Common myeloid progenitor, CD34-positive (primary cell): ENCODE measurements at regions of chr16 and their contacts with region 1.

Region 1: GRCh38 chr16:30692381-30693064 is 6.4 kb upstream of the SRCAP start:
- DNase-seq: peak in 2 of 3 donors; percentile 52 to 54
- H3K4me3 ChIP-seq: no peak overlapping the region
- H3K27ac ChIP-seq: no peak overlapping the region
- H3K4me1 ChIP-seq: peaks cover 4 to 32% (median 30%) of the 10 kb centered on the region in 4 experiments
- H3K27me3 ChIP-seq: no peaks in the 10 kb centered on the region

Region 2: GRCh38 chr16:30551781-30552180 is 140.7 kb before region 1 on chr16:
- CTCF ChIA-PET with region 1: no interaction called
- POLR2A ChIA-PET with region 1: no interaction called
- DNase-seq: no peak
- H3K4me3 ChIP-seq: no peak overlapping the region
- H3K27ac ChIP-seq: no peak overlapping the region
- H3K4me1 ChIP-seq: peaks cover 0 to 14% (median 11%) of the 10 kb centered on the region in 4 experiments
- H3K27me3 ChIP-seq: no peaks in the 10 kb centered on the region

Region 3: GRCh38 chr16:30650369-30651123 is 42.0 kb before region 1 on chr16 and contains the start of gene PRR14:
- CTCF ChIA-PET with region 1: interaction called, 19 read pairs
- POLR2A ChIA-PET with region 1: no interaction called
- DNase-seq: peak; percentile 100
- H3K4me3 ChIP-seq: peak within 1 kb of the TSS; percentile 60 to 98 (median 90)
- H3K27ac ChIP-seq: peak within 1 kb of the TSS; percentile 94 to 95
- H3K4me1 ChIP-seq: peaks cover 6 to 43% (median 32%) of the 10 kb centered on the region in 4 experiments
- H3K27me3 ChIP-seq: no peaks in the 10 kb centered on the region

Region 4: DNA sequence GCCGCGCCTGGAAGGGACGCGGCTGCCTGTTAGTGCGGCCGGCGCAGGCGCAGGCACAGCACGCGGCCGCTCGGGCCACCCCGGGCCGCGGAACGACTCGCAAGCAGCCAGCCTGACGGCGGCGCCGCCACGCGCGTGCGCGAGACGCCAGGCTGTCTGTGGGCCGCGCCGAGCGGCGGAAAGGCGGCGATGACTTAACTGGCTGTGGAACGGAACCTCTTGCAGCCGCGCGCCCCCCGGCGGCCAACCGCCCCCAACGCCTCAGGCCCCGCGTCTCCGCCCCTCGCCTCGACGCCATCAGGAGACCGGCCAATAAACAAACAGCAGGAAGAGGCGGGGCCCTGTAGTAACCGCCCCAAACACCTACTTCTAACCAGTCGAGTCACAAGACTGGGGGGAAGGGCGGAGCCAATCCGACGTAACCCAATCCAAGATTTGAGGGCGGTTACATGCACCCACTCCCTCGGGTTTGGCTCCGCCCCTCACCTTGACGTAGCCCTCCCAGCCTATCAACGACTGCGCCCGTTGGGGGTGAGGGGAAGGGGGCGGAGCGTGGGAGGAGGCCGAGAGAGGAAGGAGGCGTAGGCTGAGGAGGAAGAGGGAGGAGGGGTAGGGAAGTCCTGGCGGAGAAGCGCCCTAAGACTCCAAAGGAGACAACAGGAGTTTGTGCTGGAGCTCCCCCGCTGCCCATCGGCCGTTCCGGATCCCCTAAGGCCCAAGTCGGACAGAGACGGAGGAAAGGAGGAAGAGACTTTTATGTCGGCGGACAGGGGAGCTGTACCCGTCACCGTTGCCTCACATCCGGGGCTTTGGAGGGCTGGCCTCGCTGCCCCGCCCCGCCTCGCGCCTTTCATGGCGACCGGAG is 34.4 kb before region 1 on chr16 and contains the start of gene FBRS:
- CTCF ChIA-PET with region 1: interaction called, 54 read pairs
- POLR2A ChIA-PET with region 1: interaction called, 43 read pairs
- DNase-seq: peak; percentile 100
- H3K4me3 ChIP-seq: peak within 1 kb of the TSS; percentile 86 to 94 (median 90)
- H3K27ac ChIP-seq: peak within 1 kb of the TSS; percentile 100
- H3K4me1 ChIP-seq: peaks cover 8 to 38% (median 35%) of the 10 kb centered on the region in 4 experiments
- H3K27me3 ChIP-seq: no peaks in the 10 kb centered on the region

Region 5: GRCh38 chr16:30663820-30664396 is 28.6 kb before region 1 on chr16:
- CTCF ChIA-PET with region 1: interaction called, 54 read pairs
- POLR2A ChIA-PET with region 1: interaction called, 43 read pairs
- DNase-seq: no peak
- H3K4me3 ChIP-seq: no peak overlapping the region
- H3K27ac ChIP-seq: peak overlapping the region in 1 of 2 experiments; percentile 31
- H3K4me1 ChIP-seq: peaks cover 5 to 25% (median 23%) of the 10 kb centered on the region in 4 experiments
- H3K27me3 ChIP-seq: no peaks in the 10 kb centered on the region

Region 6: DNA sequence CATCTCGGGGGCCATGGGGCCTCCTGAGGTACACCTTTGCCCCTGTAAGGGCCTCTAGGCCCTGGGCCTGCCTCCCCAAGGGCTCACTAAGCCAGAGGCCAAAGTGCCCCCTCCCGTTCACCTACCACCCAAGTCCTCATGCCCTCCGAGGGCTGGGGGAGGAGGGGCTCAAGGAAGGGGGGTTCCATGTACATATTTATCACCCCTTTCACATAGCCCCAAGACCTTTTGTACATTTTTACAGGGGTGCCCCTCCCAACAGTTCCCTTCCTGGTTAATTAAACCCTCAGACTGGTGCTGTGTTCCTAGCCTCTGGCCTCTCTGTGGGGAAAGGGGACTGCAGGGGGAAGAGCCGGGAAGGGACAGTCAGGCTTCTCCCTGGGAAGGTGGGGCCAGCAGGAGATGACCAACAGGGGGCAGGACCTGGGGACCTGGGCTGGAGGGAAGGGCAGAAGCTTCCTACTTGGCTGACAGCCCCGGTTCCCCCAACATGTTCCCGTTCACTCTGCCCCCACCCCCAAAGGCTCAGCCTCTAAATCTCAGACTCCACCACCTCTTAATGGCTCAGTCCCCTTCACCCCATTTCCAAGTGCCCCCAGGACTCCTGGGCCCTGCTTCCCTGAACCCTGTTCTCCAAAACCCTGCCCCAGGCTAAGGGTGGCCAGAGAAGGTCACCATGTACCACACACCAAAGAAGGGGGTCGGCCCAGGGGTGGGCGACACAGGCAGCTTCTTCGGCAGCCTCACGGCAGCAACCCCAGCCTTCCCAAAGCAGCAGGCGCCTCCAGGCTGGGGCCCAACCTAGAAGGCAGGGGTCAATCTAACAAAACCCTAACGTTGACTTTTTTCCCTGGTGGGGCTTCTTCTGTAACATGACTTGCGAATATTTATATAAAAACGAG is 22.4 kb before region 1 on chr16:
- CTCF ChIA-PET with region 1: interaction called, 54 read pairs
- POLR2A ChIA-PET with region 1: interaction called, 4 read pairs
- DNase-seq: no peak
- H3K4me3 ChIP-seq: no peak overlapping the region
- H3K27ac ChIP-seq: no peak overlapping the region
- H3K4me1 ChIP-seq: no peaks in the 10 kb centered on the region
- H3K27me3 ChIP-seq: no peaks in the 10 kb centered on the region

Region 7: GRCh38 chr16:30677931-30678585 is 14.5 kb before region 1 on chr16:
- CTCF ChIA-PET with region 1: interaction called, 31 read pairs
- POLR2A ChIA-PET with region 1: interaction called, 3 read pairs
- DNase-seq: no peak
- H3K4me3 ChIP-seq: no peak overlapping the region
- H3K27ac ChIP-seq: no peak overlapping the region
- H3K4me1 ChIP-seq: no peaks in the 10 kb centered on the region
- H3K27me3 ChIP-seq: no peaks in the 10 kb centered on the region